ENCODE measurements at regions of chr13 and their contacts with region 1.

Region 1: GRCh38 chr13:36273431-36273830 is 24.2 kb downstream of the CCDC169 start:
- DNase-seq: no peak
- H3K4me3 ChIP-seq: no peak overlapping the region
- H3K27ac ChIP-seq: no peak overlapping the region
- H3K4me1 ChIP-seq: no peaks in the 10 kb centered on the region
- H3K27me3 ChIP-seq: no peaks in the 10 kb centered on the region
- CTCF ChIP-seq: no peak
- POLR2A ChIP-seq: no peak

Region 2: DNA sequence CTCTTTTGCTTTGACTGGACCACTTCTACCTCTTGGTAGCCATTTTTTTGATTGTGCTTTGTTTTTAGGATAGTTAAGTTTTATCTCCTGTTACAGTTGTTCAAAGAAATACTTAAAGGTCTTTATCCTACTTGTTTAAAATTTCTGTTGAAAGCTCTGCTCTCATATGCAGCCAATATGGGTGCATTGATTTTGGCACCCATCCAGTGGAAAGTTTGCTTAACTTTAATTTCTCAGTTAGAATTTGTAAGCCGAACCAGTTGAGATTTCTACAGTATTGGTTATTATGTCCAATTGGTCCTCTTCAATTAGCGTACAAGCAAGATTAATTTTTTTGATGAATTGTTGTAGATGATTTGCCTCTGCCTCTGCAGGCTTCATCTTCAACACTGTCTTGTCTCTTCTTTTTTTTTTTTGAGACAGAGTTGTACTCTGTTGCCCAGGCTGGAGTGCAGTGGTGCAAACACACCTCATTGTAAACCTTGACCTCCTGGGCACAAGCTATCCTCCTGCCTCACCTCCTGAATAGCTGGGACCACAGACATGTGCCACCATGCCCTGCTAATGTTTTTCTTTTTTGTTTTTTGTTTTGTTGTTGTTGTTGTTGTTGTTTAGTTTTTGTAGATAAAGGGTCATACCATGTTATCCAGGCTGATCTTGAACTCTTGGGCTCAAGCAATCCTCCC is 862.2 kb before region 1 on chr13:
- intact Hi-C with region 1: no loop called
- DNase-seq: no peak
- H3K4me3 ChIP-seq: no peak overlapping the region
- H3K27ac ChIP-seq: no peak overlapping the region
- H3K4me1 ChIP-seq: no peaks in the 10 kb centered on the region
- H3K27me3 ChIP-seq: no peaks in the 10 kb centered on the region
- CTCF ChIP-seq: no peak
- POLR2A ChIP-seq: no peak

Region 3: DNA sequence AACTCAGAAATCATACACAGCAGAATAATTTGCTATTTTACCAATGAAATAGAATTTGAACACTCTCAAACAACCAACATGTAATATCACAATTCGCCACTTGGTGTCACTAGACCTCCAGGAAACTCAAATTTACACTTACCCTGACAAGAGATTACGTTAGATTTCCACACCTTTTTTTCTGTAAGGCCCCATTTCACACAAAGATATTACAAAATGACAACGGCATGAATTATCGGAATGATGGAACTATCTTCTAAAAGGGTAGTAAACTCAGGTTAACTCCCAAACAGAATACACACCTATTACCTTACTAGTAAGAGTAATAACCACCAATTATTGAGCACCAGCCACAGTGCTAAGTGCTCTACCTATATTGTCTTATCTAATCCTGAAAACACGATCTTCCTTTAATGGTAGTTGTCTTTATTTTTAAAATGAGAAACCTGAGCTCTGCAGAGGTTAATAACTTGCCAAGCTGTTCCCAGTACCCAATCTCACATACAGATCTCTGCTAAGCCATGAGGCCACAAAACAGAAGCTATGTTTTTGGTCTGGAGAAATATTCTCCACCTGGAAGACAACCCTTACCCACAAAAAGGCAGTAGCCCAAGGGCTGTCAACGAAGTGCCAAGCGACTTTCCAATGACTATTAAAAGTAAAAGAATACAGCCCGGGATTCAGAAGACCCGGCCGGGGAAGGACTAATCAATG is 294.7 kb before region 1 on chr13:
- intact Hi-C with region 1: loop called (anchors 5 kb)
- DNase-seq: no peak
- H3K4me3 ChIP-seq: no peak overlapping the region
- H3K27ac ChIP-seq: peak overlapping the region in 5 of 8 donors; percentile 4 to 57 (median 45)
- H3K4me1 ChIP-seq: peaks cover 0 to 12% (median 4%) of the 10 kb centered on the region in 6 donors
- H3K27me3 ChIP-seq: no peaks in the 10 kb centered on the region
- CTCF ChIP-seq: peak in 10 of 11 experiments; percentile 37 to 78 (median 70)
- POLR2A ChIP-seq: no peak

Measured in spleen (tissue), 13 donors.